Heart left ventricle (tissue), 16 donors: ENCODE measurements at regions of chrX and their contacts with region 1.

Region 1: GRCh38 chrX:37905436-37906147 is 58.2 kb upstream of the DYNLT3 start:
- DNase-seq: peak in 4 of 5 donors; percentile 8 to 31 (median 18)
- ATAC-seq: peak in 3 of 4 donors; percentile 66 to 87 (median 78)
- H3K4me3 ChIP-seq: peak overlapping the region in 10 of 12 donors; percentile 4 to 54 (median 35)
- H3K27ac ChIP-seq: no peak overlapping the region
- H3K4me1 ChIP-seq: peaks cover 0 to 8% (median 0%) of the 10 kb centered on the region in 12 donors
- H3K27me3 ChIP-seq: peaks cover 0 to 29% (median 0%) of the 10 kb centered on the region in 9 donors
- CTCF ChIP-seq: peak in 5 of 12 donors; percentile 9 to 35 (median 29)
- POLR2A ChIP-seq: no peak

Region 2: GRCh38 chrX:37846934-37847732 is 58.5 kb before region 1 on chrX and contains the start of gene DYNLT3:
- intact Hi-C with region 1: loop called in 1 of 10 experiments (anchors 2 kb)
- DNase-seq: peak; percentile 82 to 89 (median 85)
- ATAC-seq: peak; percentile 98 to 100 (median 99)
- H3K4me3 ChIP-seq: peak within 1 kb of the TSS; percentile 15 to 82 (median 76)
- H3K27ac ChIP-seq: peak within 1 kb of the TSS; percentile 52 to 90 (median 80)
- H3K4me1 ChIP-seq: peaks cover 0 to 10% (median 0%) of the 10 kb centered on the region in 12 donors
- H3K27me3 ChIP-seq: no peaks in the 10 kb centered on the region
- CTCF ChIP-seq: peak in 1 of 12 donors; percentile 3
- POLR2A ChIP-seq: peak; percentile 46 to 90
- total RNA-seq, gene DYNLT3: 15.0 to 31.8 (median 21.0) TPM